ENCODE measurements at regions of chr1 and their contacts with region 1.

Region 1: GRCh38 chr1:109643385-109644230 is 12.3 kb upstream of the GSTM4 start:
- DNase-seq: no peak
- ATAC-seq: peak; percentile 98
- H3K4me3 ChIP-seq: no peak overlapping the region
- H3K27ac ChIP-seq: no peak overlapping the region
- H3K4me1 ChIP-seq: peaks cover 9% of the 10 kb centered on the region
- H3K27me3 ChIP-seq: no peaks in the 10 kb centered on the region
- CTCF ChIP-seq: peak; percentile 91 to 97 (median 92)
- EP300 ChIP-seq: no peak
- POLR2A ChIP-seq: no peak
- RAD21 ChIP-seq: peak; percentile 87

Region 2: DNA sequence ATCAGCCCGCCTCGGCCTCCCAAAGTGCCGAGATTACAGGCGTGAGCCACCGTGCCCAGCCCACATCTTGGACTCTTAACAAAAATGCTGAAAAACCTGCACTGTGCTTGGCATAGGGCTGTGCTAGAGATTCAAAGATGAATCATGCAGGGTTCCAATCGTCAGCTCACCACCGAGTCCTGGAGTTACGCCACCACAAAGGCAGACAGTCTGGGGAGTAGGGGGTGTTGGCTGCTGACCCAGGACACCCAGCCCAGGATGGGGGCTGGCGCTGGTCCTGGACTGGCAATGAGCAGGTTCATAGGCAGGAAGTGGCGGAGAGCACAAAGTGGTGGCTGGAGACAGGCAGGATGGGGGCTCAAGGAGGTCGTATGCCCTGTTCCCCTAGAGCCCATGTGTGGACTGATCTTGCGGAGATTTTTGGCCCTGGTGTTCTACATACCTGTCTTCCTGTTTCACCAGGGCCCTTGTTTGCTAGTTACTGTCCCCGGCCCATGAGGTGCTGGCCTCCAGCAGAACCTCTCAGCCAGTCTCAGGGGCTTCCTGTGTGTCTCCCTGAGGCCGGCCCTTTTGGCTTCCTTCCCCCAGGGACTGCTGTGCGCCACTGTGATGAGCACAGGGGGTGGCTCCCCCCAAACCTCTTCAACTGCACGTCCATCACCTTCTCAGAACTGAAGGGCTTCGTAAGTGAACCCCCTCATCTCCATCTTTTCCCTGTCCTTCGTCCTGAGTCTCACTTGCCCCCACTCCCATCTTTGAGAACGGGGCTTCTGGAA is 376.5 kb before region 1 on chr1:
- CTCF ChIA-PET with region 1: no interaction called
- POLR2A ChIA-PET with region 1: no interaction called
- RAD21 ChIA-PET with region 1: no interaction called
- SMC1A ChIA-PET with region 1: no interaction called
- in situ Hi-C with region 1: no loop called
- intact Hi-C with region 1: no loop called
- DNase-seq: no peak
- ATAC-seq: no peak
- H3K4me3 ChIP-seq: no peak overlapping the region
- H3K27ac ChIP-seq: no peak overlapping the region
- H3K4me1 ChIP-seq: no peaks in the 10 kb centered on the region
- H3K27me3 ChIP-seq: no peaks in the 10 kb centered on the region
- CTCF ChIP-seq: no peak
- EP300 ChIP-seq: no peak
- POLR2A ChIP-seq: no peak
- RAD21 ChIP-seq: no peak

Region 3: DNA sequence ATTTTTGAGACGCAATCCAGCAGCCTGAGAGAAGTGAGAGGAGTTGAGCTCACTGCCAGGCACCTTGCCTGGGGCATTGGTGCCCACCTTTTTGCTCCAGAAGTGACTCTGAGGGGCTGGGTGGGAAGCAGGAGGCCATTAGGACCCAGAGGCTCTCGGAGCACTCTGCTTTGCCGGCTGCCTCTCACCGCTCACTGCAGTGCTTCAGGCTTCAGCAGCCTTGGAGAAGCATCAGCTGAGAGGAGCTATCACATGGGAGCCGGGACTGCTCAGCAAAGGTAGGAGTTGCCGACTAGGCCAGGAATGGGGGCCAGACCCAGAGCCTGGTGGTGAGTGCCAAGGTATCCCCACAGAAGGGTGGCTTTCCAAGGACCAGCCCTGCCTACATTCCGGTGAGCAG is 103.9 kb before region 1 on chr1 and contains the start of gene GPR61:
- CTCF ChIA-PET with region 1: interaction called, 201 read pairs
- POLR2A ChIA-PET with region 1: interaction called, 4 read pairs
- RAD21 ChIA-PET with region 1: interaction called, 106 read pairs
- SMC1A ChIA-PET with region 1: interaction called, 117 read pairs
- in situ Hi-C with region 1: no loop called
- intact Hi-C with region 1: no loop called
- DNase-seq: no peak
- ATAC-seq: no peak
- H3K4me3 ChIP-seq: no peak within 1 kb of the TSS
- H3K27ac ChIP-seq: no peak within 1 kb of the TSS
- H3K4me1 ChIP-seq: no peaks in the 10 kb centered on the region
- H3K27me3 ChIP-seq: no peaks in the 10 kb centered on the region
- CTCF ChIP-seq: no peak
- EP300 ChIP-seq: no peak
- POLR2A ChIP-seq: no peak
- RAD21 ChIP-seq: no peak
- polyA plus RNA-seq, gene GPR61: 0.19 to 1.1 TPM

Region 4: DNA sequence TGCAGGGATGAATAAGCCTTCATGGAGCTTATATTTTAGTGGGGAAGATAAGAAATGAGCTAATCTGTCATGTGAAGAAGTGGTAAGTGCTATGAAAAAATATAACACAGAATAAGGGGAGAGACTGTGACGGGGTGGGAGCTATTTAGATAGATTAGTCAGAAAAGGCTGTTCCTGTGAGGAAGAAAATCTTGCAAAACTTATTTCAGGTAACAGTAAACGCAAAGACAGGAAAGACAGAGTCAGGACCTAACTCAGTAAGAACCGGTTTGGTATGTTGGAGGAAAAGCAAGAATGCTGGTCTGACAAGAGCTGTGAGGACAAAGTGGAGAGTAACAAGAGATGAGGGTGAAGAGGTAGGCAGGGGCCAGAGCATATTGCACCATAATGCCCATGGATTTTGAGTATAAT is 73.2 kb before region 1 on chr1:
- CTCF ChIA-PET with region 1: interaction called, 16 read pairs
- POLR2A ChIA-PET with region 1: no interaction called
- RAD21 ChIA-PET with region 1: interaction called, 4 read pairs
- SMC1A ChIA-PET with region 1: interaction called, 3 read pairs
- in situ Hi-C with region 1: no loop called
- intact Hi-C with region 1: no loop called
- DNase-seq: no peak
- ATAC-seq: no peak
- H3K4me3 ChIP-seq: no peak overlapping the region
- H3K27ac ChIP-seq: no peak overlapping the region
- H3K4me1 ChIP-seq: peaks cover 15% of the 10 kb centered on the region
- H3K27me3 ChIP-seq: no peaks in the 10 kb centered on the region
- CTCF ChIP-seq: no peak
- EP300 ChIP-seq: no peak
- POLR2A ChIP-seq: no peak
- RAD21 ChIP-seq: no peak

Region 5: DNA sequence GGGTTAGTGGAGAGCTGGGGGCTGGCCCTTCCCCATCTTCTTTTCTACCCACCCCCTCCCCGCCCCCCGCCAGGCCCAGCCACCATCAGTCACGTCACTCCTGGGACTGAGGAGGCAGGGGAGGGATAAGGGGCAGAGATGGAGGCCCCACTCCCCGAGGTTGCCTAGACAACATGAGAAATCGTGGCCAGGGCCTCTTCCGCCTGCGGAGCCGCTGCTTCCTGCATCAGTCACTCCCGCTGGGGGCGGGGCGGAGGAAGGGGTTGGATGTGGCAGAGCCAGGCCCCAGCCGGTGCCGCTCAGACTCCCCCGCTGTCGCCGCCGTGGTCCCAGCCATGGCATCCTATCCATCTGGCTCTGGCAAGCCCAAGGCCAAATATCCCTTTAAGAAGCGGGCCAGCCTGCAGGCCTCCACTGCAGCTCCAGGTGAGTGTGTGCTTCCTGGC is 22.7 kb before region 1 on chr1:
- CTCF ChIA-PET with region 1: interaction called, 22 read pairs
- POLR2A ChIA-PET with region 1: interaction called, 4 read pairs
- RAD21 ChIA-PET with region 1: interaction called, 9 read pairs
- SMC1A ChIA-PET with region 1: interaction called, 8 read pairs
- in situ Hi-C with region 1: no loop called
- intact Hi-C with region 1: no loop called
- DNase-seq: peak; percentile 66
- ATAC-seq: peak; percentile 81
- H3K4me3 ChIP-seq: peak overlapping the region; percentile 85
- H3K27ac ChIP-seq: peak overlapping the region; percentile 72
- H3K4me1 ChIP-seq: peaks cover 41% of the 10 kb centered on the region
- H3K27me3 ChIP-seq: no peaks in the 10 kb centered on the region
- CTCF ChIP-seq: no peak
- EP300 ChIP-seq: no peak
- POLR2A ChIP-seq: peak; percentile 52; the same call in 1 of the 2 replicates
- RAD21 ChIP-seq: no peak

Region 6: GRCh38 chr1:109655601-109656519 is 12.3 kb after region 1 on chr1 and contains the start of gene GSTM4:
- CTCF ChIA-PET with region 1: interaction called, 299 read pairs
- POLR2A ChIA-PET with region 1: interaction called, 13 read pairs
- RAD21 ChIA-PET with region 1: interaction called, 48 read pairs
- SMC1A ChIA-PET with region 1: interaction called, 63 read pairs
- in situ Hi-C with region 1: no loop called
- intact Hi-C with region 1: no loop called
- DNase-seq: peak; percentile 47
- ATAC-seq: peak; percentile 95
- H3K4me3 ChIP-seq: peak within 1 kb of the TSS; percentile 75
- H3K27ac ChIP-seq: peak within 1 kb of the TSS; percentile 60
- H3K4me1 ChIP-seq: 0 out of 2 replicates have a peak, but pooled peaks cover 4% of the 10 kb centered on the region
- H3K27me3 ChIP-seq: no peaks in the 10 kb centered on the region
- CTCF ChIP-seq: no peak
- EP300 ChIP-seq: no peak
- POLR2A ChIP-seq: peak; percentile 77
- RAD21 ChIP-seq: no peak
- polyA plus RNA-seq, gene GSTM4: 16.9 to 17.0 TPM

Region 7: DNA sequence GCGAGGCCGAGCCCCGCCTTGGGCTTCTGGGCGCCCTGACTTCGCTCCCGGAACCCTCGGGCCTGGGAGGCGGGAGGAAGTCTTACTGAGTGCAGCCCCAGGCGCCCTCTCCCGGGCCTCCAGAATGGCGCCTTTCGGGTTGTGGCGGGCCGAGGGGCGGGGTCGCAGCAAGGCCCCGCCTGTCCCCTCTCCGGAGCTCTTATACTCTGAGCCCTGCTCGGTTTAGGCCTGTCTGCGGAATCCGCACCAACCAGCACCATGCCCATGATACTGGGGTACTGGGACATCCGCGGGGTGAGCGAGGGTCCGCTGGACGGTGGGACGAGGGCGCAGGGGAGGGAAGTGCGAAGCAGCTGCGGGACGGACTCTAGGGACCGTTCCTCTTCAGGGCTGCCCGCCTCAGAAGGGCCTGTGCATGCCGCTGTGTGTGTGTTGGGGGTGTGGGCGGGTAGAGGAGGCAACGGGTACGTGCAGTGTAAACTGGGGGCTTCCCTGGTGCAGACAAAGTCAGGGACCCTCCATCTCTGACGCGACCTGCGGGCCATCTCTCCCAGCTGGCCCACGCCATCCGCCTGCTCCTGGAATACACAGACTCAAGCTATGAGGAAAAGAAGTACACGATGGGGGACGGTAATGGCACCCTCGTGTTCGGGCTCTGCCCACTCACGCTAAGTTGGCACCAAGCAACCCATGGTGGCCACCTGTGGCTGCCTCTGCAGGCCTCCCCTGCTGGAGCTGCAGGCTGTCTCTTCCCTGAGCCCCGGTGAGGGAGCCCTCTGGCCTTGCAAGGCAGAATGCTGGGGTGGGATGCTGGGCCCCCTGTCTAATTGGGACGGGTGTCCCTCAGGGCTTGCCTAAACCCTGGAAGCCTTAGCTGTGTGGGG is 44.2 kb after region 1 on chr1 and contains the start of gene GSTM1:
- CTCF ChIA-PET with region 1: interaction called, 34 read pairs
- POLR2A ChIA-PET with region 1: interaction called, 4 read pairs
- RAD21 ChIA-PET with region 1: interaction called, 12 read pairs
- SMC1A ChIA-PET with region 1: interaction called, 7 read pairs
- in situ Hi-C with region 1: no loop called
- intact Hi-C with region 1: loop called (anchors 5 kb)
- DNase-seq: peak; percentile 25
- ATAC-seq: peak; percentile 99
- H3K4me3 ChIP-seq: peak within 1 kb of the TSS; percentile 71
- H3K27ac ChIP-seq: peak within 1 kb of the TSS; percentile 72
- H3K4me1 ChIP-seq: no peaks in the 10 kb centered on the region
- H3K27me3 ChIP-seq: no peaks in the 10 kb centered on the region
- CTCF ChIP-seq: peak; percentile 29 to 49 (median 38); a peak in 4 of 6 replicates
- EP300 ChIP-seq: no peak
- POLR2A ChIP-seq: peak; percentile 83
- RAD21 ChIP-seq: peak; percentile 52
- polyA plus RNA-seq, gene GSTM1: 66.7 to 75.6 TPM

Region 8: DNA sequence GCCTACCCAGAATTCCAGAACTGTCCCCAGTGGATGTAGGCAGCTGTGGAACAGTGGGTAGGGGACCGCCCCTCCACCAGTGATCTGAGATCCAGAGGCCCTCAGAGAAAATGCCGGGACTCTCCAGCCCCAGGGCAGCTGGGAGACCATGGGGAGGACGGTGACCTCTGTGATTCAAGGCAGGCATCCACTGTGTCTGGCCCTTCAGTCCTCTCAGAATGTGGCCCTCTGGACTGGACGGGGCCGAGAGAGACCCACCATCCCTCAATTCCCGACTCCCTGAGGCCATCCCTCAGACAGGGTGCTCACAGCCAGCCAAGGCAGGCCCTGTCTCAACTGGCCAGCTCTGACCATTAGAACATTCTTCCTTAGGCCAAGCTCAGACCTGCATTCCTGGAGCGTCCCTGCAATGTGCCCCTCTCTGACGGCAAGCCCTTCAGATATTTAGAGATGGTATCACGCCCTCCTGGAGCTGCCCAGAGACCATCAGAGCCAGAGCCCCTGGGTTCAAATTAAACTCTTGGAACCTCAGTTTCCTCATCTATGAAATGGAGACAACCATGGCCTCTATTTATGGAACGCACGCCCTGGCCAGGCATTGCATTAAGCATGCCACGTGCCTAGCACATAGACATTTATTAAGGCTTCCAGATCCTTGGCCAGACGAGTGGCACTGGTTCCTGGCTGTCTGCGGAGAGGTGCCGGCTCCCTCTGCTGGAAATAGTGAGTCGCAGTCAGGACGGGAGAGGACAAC is 129.7 kb after region 1 on chr1:
- CTCF ChIA-PET with region 1: interaction called, 282 read pairs
- POLR2A ChIA-PET with region 1: no interaction called
- RAD21 ChIA-PET with region 1: interaction called, 59 read pairs
- SMC1A ChIA-PET with region 1: interaction called, 76 read pairs
- in situ Hi-C with region 1: loop called (anchors 5 kb)
- intact Hi-C with region 1: loop called (anchors 5 kb)
- DNase-seq: peak; percentile 28
- ATAC-seq: peak; percentile 94
- H3K4me3 ChIP-seq: no peak overlapping the region
- H3K27ac ChIP-seq: no peak overlapping the region
- H3K4me1 ChIP-seq: no peaks in the 10 kb centered on the region
- H3K27me3 ChIP-seq: peaks cover 0 to 2% of the 10 kb centered on the region in 2 experiments; a peak in 1 of 4 replicates
- CTCF ChIP-seq: peak; percentile 90 to 97 (median 92)
- EP300 ChIP-seq: no peak
- POLR2A ChIP-seq: no peak
- RAD21 ChIP-seq: peak; percentile 98